Activated T-helper 1 cell treated with anti-CD3 and anti-CD28 coated beads, Interleukin-12 subunit alpha, Interleukin-12 subunit beta, Interleukin-2, Interleukin-4 antibody, amounts not matched to agents 30 ng/mL and 10 ng/mL and 1 ng/mL, durations not matched to agents 14 hours and 24 hours and 36 hours (primary cell): ENCODE measurements at regions of chr3 and their contacts with region 1.

Region 1: GRCh38 chr3:108914774-108915641 is 38.7 kb downstream of the GUCA1C start:
- DNase-seq: peak; percentile 56
- H3K4me3 Mint-ChIP-seq: peak overlapping the region; percentile 12
- H3K27ac Mint-ChIP-seq: peak overlapping the region; percentile 61
- H3K4me1 Mint-ChIP-seq: peaks cover 18% of the 10 kb centered on the region
- H3K27me3 Mint-ChIP-seq: peaks cover 15% of the 10 kb centered on the region

Region 2: GRCh38 chr3:108552267-108553159 is 362.5 kb before region 1 on chr3:
- intact Hi-C with region 1: loop called (anchors 1 kb)
- DNase-seq: no peak
- H3K4me3 Mint-ChIP-seq: no peak overlapping the region
- H3K27ac Mint-ChIP-seq: no peak overlapping the region
- H3K4me1 Mint-ChIP-seq: peaks cover 6% of the 10 kb centered on the region
- H3K27me3 Mint-ChIP-seq: no peaks in the 10 kb centered on the region

Region 3: DNA sequence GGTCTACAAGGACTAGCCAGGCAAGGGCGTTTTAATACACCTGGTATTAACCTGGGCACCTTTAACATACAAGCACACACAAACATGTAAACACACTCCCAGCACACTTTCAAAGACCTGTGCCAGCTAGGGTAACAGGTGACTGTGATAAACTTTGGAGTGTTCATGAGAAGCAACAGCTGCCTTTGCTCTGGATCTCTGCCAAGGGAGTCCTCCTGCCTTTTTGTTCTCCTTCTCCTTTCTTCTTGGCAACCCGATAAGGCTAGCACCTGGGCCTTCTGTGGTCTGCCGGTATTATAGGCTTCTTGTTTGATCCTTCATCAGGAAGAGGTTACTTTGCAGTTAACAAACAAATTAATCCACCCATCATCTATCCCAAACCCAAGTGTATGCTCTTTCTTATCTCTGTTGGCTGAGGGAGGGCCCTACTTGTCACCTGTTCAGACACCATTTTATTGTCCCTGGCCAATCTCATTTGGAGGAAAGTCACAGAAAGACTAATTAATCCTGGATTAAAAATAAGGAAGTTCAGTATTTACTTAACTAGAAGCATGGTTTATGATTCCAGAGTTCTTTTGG is 157.5 kb before region 1 on chr3 and contains the start of gene RETNLB:
- intact Hi-C with region 1: loop called (anchors 5 kb)
- DNase-seq: no peak
- H3K4me3 Mint-ChIP-seq: no peak within 1 kb of the TSS
- H3K27ac Mint-ChIP-seq: no peak within 1 kb of the TSS
- H3K4me1 Mint-ChIP-seq: no peaks in the 10 kb centered on the region
- H3K27me3 Mint-ChIP-seq: no peaks in the 10 kb centered on the region
- total RNA-seq, gene RETNLB: not detected in 2 replicates

Region 4: GRCh38 chr3:108791473-108791872 is 123.5 kb before region 1 on chr3:
- intact Hi-C with region 1: no loop called
- DNase-seq: no peak
- H3K4me3 Mint-ChIP-seq: no peak overlapping the region
- H3K27ac Mint-ChIP-seq: no peak overlapping the region
- H3K4me1 Mint-ChIP-seq: no peaks in the 10 kb centered on the region
- H3K27me3 Mint-ChIP-seq: peaks cover 8% of the 10 kb centered on the region

Region 5: DNA sequence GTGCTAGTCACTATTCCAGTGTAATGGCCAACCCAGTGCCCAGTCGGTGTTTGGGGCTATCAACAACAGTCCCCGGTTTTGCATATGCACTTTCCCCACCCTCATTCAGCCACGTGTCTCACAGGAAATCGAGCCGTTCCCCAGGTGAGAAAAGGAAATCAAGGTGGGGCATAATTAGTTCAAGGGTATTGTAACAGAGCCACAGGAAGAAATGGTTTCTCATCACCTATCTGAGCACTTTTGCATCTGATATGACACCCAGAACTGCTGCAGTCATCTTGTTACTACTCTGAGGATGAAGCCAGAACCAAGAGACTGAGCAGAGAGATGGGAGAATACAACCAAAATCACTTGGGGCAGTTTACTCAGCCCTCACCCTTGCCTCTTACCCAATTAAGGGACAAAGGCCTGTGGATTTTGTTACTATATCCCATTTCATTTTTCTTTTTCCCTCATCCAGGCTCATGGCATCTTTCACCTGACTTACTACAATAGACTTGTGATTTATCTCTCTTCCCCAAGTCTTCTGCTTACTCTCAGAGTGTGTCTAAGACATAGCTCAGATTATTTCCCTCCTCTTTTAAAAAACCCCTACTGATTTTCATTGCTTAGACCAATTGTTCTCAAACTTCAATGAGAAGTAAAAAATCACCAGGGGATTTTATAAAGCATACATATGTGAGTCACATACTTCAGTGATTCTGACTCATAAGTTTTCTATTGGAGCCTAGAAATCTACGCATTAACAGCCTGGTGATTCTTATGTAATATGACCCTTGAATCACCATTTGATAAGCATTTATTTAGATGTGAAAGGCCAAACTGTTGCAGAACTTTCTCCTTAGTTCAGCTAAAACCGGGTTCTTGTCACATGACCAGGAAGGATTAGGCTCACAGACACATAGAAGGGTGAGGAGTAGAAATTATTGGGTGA is 51.9 kb before region 1 on chr3:
- intact Hi-C with region 1: loop called (anchors 2 kb)
- DNase-seq: no peak
- H3K4me3 Mint-ChIP-seq: peak overlapping the region; percentile 59
- H3K27ac Mint-ChIP-seq: peak overlapping the region; percentile 96
- H3K4me1 Mint-ChIP-seq: peaks cover 52% of the 10 kb centered on the region
- H3K27me3 Mint-ChIP-seq: no peaks in the 10 kb centered on the region

Region 6: GRCh38 chr3:109081746-109082510 is 166.9 kb after region 1 on chr3:
- intact Hi-C with region 1: loop called (anchors 5 kb)
- DNase-seq: no peak
- H3K4me3 Mint-ChIP-seq: no peak overlapping the region
- H3K27ac Mint-ChIP-seq: no peak overlapping the region
- H3K4me1 Mint-ChIP-seq: peaks cover 5% of the 10 kb centered on the region
- H3K27me3 Mint-ChIP-seq: peaks cover 30% of the 10 kb centered on the region